SK-N-SH (cell line): ENCODE measurements at regions of chr17 and their contacts with region 1.

Region 1: GRCh38 chr17:82153745-82154375 is 55.8 kb upstream of the FASN start:
- DNase-seq: peak; percentile 97
- H3K4me3 ChIP-seq: no peak overlapping the region; a peak in 1 of 4 replicates
- H3K27ac ChIP-seq: no peak overlapping the region
- H3K4me1 ChIP-seq: no peaks in the 10 kb centered on the region
- H3K27me3 ChIP-seq: no peaks in the 10 kb centered on the region
- CTCF ChIP-seq: peak; percentile 85
- EP300 ChIP-seq: no peak
- RAD21 ChIP-seq: peak; percentile 97

Region 2: DNA sequence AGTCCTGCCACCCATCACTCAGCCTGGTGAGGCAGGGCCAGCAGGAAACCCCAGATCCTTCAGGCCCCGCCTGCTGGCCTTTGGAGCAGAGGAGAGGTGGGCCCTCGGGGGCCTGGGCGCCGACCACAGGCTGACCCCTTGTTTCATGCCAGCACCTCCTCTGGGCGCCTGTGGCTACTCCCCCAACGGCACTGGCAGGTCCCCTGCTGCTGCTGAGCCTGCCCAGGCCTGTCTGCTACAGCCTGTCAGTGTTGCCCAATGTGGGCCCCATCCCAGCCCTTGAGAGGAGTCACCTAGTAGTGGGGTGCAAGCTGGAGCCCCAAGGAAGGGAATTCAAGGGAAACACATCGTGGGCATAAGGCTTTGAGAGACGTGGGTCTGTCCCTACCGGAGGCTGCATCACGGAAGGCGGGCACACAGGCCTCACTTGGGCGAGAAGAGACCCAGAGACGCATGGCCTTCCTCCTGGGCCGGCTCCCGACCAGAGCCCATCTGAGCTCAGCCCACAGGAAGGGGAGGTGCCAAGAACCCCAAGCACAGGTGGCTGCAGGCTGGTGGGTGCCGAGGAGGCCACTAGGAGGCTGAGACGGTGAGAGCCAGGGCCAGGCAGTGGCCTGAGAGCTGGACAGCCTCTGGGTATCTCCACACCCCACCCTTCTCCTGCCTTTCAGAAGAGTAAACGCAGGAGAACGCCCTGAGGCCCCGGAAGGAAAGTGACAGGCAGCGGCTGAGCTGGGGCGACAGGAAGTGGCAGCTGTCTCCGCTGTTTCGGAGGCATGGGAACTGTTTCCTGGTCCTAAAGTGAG is 47.8 kb before region 1 on chr17:
- CTCF ChIA-PET with region 1: interaction called, 31 read pairs
- POLR2A ChIA-PET with region 1: interaction called, 3 read pairs
- DNase-seq: peak; percentile 97
- H3K4me3 ChIP-seq: peak overlapping the region in 1 of 2 experiments; percentile 9; a peak in 1 of 4 replicates
- H3K27ac ChIP-seq: peak overlapping the region; percentile 16 to 93; a peak in 3 of 4 replicates
- H3K4me1 ChIP-seq: peaks cover 11 to 63% of the 10 kb centered on the region in 2 experiments; a peak in 3 of 4 replicates
- H3K27me3 ChIP-seq: no peaks in the 10 kb centered on the region
- CTCF ChIP-seq: peak; percentile 49
- EP300 ChIP-seq: peak in 1 of 2 experiments; percentile 42; a peak in 1 of 4 replicates
- RAD21 ChIP-seq: peak; percentile 38

Region 3: DNA sequence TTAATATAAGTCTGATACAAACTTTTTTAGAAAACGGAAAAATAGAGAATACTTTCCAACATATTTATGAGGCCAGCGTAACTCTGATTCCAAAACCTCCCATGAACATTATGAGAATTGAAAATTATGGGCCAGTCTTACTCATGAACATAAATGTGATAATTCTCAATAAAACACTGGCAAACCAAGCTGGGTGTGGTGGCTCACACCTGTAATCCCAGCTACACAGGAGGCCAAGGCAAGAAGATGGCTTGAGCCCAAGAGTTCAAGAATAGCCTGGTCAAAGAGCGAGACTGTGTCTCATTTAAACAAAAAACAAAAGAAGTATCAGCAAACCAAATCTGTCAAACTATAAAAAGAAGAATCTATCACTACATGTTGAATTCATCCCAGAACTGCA is 11.0 kb after region 1 on chr17:
- CTCF ChIA-PET with region 1: interaction called, 32 read pairs
- POLR2A ChIA-PET with region 1: no interaction called
- DNase-seq: no peak
- H3K4me3 ChIP-seq: no peak overlapping the region
- H3K27ac ChIP-seq: no peak overlapping the region
- H3K4me1 ChIP-seq: no peaks in the 10 kb centered on the region
- H3K27me3 ChIP-seq: no peaks in the 10 kb centered on the region
- CTCF ChIP-seq: no peak
- EP300 ChIP-seq: no peak
- RAD21 ChIP-seq: no peak

Region 4: GRCh38 chr17:82180776-82181528 is 27.1 kb after region 1 on chr17:
- CTCF ChIA-PET with region 1: interaction called, 14 read pairs
- POLR2A ChIA-PET with region 1: interaction called, 3 read pairs
- DNase-seq: no peak
- H3K4me3 ChIP-seq: no peak overlapping the region
- H3K27ac ChIP-seq: no peak overlapping the region
- H3K4me1 ChIP-seq: no peaks in the 10 kb centered on the region; a peak in 1 of 4 replicates
- H3K27me3 ChIP-seq: no peaks in the 10 kb centered on the region
- CTCF ChIP-seq: no peak
- EP300 ChIP-seq: no peak
- RAD21 ChIP-seq: no peak